ENCODE measurements at regions of chr13 and their contacts with region 1.

Region 1: DNA sequence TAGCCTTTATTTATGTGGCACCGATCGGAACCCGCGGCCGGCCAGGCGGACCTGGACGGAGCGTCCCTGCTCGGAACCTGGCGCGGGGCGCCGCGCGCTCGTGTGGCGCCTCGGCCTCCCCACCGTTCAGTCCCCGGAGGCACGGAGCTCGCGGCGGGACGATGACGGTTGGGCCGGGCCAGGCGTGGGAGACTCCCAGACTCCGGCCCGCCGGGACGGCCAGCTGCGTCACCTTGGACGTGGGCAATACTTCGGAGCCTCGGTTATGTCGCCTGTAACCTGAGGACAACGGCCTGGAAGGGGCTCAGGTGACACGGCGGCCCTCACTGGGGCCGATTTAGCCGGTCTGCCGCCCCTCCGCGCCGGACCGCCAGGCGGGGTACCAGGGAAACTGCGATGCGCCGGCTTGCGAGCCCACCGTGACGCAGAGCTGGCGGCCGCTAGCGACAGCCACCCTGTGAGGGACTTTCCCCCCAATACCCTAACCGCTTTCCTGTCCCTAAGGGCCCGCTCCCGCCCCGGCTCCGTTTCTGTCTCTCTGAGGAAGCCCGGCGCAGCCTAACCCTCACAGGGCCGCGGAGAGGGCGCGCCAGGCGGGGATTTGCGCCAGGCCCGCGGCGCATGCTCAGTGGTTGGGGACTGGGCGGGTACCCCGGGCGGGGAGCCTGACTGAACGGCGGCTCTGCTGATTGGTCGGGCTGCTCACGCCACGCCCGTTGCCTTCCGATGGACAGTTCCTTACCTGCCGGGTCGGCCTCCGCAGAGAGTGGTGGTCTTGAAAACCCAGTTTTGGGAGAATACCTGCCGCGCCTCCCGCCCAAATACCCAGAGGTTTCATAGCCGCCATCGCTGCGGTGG is 109.5 kb upstream of the DOCK9 start:
- DNase-seq: peak; percentile 94
- ATAC-seq: peak; percentile 74
- H3K4me3 ChIP-seq: peak overlapping the region; percentile 65 to 89 (median 88)
- H3K4me3 Mint-ChIP-seq: peak overlapping the region; percentile 100
- H3K27ac ChIP-seq: peak overlapping the region; percentile 82 to 92
- H3K27ac Mint-ChIP-seq: peak overlapping the region; percentile 99
- H3K4me1 ChIP-seq: peaks cover 26 to 27% of the 10 kb centered on the region in 2 donors
- H3K4me1 Mint-ChIP-seq: peaks cover 32% of the 10 kb centered on the region
- H3K27me3 ChIP-seq: peaks cover 0 to 3% (median 0%) of the 10 kb centered on the region in 4 experiments
- H3K27me3 Mint-ChIP-seq: peaks cover 5% of the 10 kb centered on the region
- CTCF ChIP-seq: peak; percentile 42

Region 2: DNA sequence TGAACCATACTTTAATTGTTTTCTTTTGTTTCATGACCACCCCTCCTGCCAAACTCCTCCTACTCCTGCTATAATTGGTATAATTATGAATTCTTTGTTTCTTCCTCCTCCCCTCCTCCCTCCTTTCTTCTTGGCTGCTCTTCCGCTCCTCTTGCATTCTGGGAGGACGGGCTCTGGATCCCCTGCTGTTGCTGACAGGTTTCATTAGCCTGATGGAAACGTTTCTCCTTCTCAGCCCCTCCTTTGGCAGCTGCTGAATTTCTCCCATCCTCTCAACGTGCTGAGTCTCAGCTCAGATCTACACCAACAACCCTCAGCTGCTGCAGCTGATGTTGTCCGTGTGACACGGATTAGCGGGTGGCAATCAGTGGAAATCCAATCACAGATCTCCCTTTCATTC is 16.2 kb after region 1 on chr13:
- CTCF ChIA-PET with region 1: no interaction called
- POLR2A ChIA-PET with region 1: no interaction called
- intact Hi-C with region 1: no loop called
- DNase-seq: no peak
- ATAC-seq: no peak
- H3K4me3 ChIP-seq: no peak overlapping the region
- H3K4me3 Mint-ChIP-seq: no peak overlapping the region
- H3K27ac ChIP-seq: no peak overlapping the region
- H3K27ac Mint-ChIP-seq: no peak overlapping the region
- H3K4me1 ChIP-seq: no peaks in the 10 kb centered on the region
- H3K4me1 Mint-ChIP-seq: no peaks in the 10 kb centered on the region
- H3K27me3 ChIP-seq: peaks cover 0 to 15% (median 9%) of the 10 kb centered on the region in 4 experiments
- H3K27me3 Mint-ChIP-seq: peaks cover 28% of the 10 kb centered on the region
- CTCF ChIP-seq: no peak

Region 3: GRCh38 chr13:99258210-99258860 is 171.0 kb after region 1 on chr13 and contains the start of gene GPR18:
- CTCF ChIA-PET with region 1: interaction called, 4 read pairs
- POLR2A ChIA-PET with region 1: no interaction called
- intact Hi-C with region 1: loop called (anchors 2 kb)
- DNase-seq: peak; percentile 75
- ATAC-seq: peak; percentile 66
- H3K4me3 ChIP-seq: peak within 1 kb of the TSS; percentile 60 to 98 (median 79)
- H3K4me3 Mint-ChIP-seq: peak within 1 kb of the TSS; percentile 98
- H3K27ac ChIP-seq: peak within 1 kb of the TSS; percentile 86 to 90
- H3K27ac Mint-ChIP-seq: peak within 1 kb of the TSS; percentile 96
- H3K4me1 ChIP-seq: peaks cover 57 to 68% of the 10 kb centered on the region in 2 donors
- H3K4me1 Mint-ChIP-seq: peaks cover 81% of the 10 kb centered on the region
- H3K27me3 ChIP-seq: no peaks in the 10 kb centered on the region
- H3K27me3 Mint-ChIP-seq: no peaks in the 10 kb centered on the region
- CTCF ChIP-seq: no peak
- total RNA-seq, gene GPR18: 17.6 and 19.1 TPM in 2 replicates

Region 4: DNA sequence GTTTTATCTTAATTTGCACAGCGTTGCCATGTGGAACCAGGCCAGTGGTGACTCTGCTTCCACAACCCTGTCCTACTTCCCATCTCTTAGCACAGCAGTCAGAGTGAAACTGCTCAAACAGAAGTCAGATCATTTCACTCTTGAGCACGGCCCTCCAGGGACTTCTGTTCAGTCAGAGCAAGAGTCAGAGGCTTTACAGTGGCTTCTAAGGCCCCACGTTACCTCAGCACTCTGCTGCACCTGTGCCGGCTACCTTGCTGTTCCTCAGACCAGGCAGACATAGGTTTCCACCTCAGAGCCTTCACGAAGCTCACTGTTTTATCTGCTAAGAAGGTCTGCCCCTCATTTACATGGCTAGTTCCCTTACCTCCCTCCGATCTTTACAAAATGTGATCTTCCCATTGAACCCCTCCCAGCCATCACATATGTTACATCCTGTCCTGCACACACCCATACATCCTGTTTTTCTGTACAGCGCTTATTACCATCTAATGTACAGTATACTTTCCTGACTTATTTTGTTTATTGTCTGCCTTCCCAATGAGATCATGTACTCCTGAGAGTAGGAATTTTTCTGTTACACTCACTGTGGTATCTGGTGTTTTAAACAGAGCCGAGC is 455.6 kb after region 1 on chr13:
- CTCF ChIA-PET with region 1: interaction called, 5 read pairs
- POLR2A ChIA-PET with region 1: interaction called, 3 read pairs
- intact Hi-C with region 1: loop called (anchors 2 kb)
- DNase-seq: peak; percentile 93
- ATAC-seq: peak; percentile 97
- H3K4me3 ChIP-seq: peak overlapping the region in 2 of 5 experiments; percentile 10 to 49
- H3K4me3 Mint-ChIP-seq: peak overlapping the region; percentile 56
- H3K27ac ChIP-seq: peak overlapping the region; percentile 83 to 89
- H3K27ac Mint-ChIP-seq: peak overlapping the region; percentile 89
- H3K4me1 ChIP-seq: peaks cover 31 to 53% of the 10 kb centered on the region in 2 donors
- H3K4me1 Mint-ChIP-seq: peaks cover 50% of the 10 kb centered on the region
- H3K27me3 ChIP-seq: no peaks in the 10 kb centered on the region
- H3K27me3 Mint-ChIP-seq: no peaks in the 10 kb centered on the region
- CTCF ChIP-seq: no peak